HEK293 (cell line): ENCODE measurements at regions of chr1 and their contacts with region 1.

Region 1: DNA sequence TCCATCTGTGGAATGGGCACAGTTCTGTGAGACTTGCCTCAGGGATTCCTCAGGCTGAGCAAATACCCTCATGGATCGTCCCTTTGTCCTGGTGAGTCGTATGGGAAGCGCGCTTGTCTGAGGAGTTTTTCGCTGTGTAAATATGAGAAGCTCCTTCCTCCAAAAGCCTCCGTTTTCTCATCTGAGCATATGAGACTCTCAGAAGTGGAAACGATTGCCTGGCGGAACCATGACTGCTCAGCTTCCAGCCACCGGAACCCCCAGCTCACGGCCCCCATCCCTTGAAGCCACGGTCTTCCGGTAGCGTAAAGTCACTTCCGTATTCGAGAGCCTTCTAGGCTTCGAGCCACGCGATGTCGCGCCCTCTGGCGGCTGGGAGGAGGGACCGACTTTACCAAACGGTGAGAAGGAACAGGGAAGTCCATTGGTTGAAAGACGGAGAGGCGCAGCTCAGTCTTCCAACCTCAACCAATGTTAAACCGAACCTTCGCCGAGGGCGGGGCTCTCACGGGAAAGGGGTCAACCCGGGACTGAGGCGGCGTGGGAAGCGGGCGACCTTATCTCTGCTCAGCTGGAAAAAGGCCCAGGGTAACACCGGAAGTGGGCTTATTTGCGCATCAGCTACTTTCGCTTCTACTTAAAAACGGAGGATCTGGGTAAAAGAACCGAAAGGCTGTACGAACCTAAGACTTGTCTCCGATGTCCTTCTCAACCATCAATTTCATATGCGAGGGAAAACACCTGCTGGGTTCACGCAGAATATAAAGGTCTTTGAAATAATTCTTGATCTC is 46.2 kb downstream of the AZIN2 start:
- H3K4me3 ChIP-seq: peak overlapping the region; percentile 75
- H3K27ac ChIP-seq: peak overlapping the region; percentile 74
- H3K4me1 ChIP-seq: peaks cover 5% of the 10 kb centered on the region
- CTCF ChIP-seq: peak; percentile 99

Region 2: GRCh38 chr1:33080885-33081553 is 46.2 kb before region 1 on chr1 and contains the start of gene AZIN2:
- CTCF ChIA-PET with region 1: interaction called, 4 read pairs
- POLR2A ChIA-PET with region 1: interaction called, 13 read pairs
- H3K4me3 ChIP-seq: peak within 1 kb of the TSS; percentile 69
- H3K27ac ChIP-seq: no peak within 1 kb of the TSS; the same call in 1 of the 2 replicates
- H3K4me1 ChIP-seq: no peaks in the 10 kb centered on the region
- CTCF ChIP-seq: no peak

Region 3: DNA sequence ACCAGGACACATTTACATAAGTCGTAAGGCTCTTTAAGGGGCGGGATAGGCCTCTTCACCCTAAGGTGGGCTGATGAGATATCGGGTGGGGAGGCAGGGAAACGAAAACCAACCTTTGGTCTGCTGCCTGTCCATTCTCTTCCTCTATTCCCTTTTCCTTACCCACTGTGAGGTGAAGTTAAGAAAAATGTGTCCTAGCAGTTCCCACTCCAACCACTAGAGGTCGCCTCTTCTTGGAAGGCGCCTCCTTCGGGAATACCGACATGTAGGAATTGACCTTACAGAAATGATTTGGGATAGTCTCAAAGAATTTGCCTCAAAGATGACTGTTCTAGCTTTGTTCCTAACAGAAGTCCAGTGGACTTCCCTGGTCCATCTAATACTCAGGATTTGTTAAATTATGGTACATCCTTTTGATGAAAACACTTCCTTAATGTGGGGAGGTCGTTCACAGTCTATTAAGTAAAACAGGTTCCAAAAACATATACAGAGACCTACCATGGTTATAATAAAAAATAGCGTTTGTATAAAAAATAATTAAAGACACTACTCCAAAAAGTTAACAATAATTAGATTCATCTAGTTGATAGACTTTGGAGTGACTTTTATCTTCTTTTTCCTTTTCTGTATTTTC is 32.1 kb before region 1 on chr1:
- CTCF ChIA-PET with region 1: interaction called, 16 read pairs
- POLR2A ChIA-PET with region 1: interaction called, 10 read pairs
- H3K4me3 ChIP-seq: no peak overlapping the region
- H3K27ac ChIP-seq: no peak overlapping the region
- H3K4me1 ChIP-seq: no peaks in the 10 kb centered on the region
- CTCF ChIP-seq: peak; percentile 67; the same call in 1 of the 2 replicates

Region 4: DNA sequence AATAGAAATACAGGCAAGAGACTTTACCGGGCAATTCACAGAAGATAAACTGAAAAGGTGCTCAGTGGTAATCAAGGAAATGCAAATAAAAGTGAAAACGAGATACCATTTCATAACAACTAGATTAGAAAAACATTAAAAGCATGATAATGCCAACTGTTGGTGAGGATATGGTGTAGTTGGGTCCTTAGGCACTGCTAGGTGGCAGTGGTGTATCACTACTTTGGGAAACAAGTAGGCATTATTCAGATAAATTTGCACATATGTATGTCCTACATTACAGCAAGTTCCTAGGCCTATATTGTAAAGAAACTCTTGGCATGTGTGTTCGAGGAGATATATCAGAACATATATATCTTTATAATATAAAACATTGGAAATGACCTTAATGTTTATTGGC is 15.2 kb before region 1 on chr1:
- CTCF ChIA-PET with region 1: interaction called, 16 read pairs
- POLR2A ChIA-PET with region 1: interaction called, 5 read pairs
- H3K4me3 ChIP-seq: no peak overlapping the region
- H3K27ac ChIP-seq: no peak overlapping the region
- H3K4me1 ChIP-seq: no peaks in the 10 kb centered on the region
- CTCF ChIP-seq: no peak

Region 5: GRCh38 chr1:33137800-33138199 is 10.6 kb after region 1 on chr1:
- CTCF ChIA-PET with region 1: interaction called, 38 read pairs
- POLR2A ChIA-PET with region 1: interaction called, 4 read pairs
- H3K4me3 ChIP-seq: no peak overlapping the region
- H3K27ac ChIP-seq: no peak overlapping the region
- H3K4me1 ChIP-seq: peaks cover 3% of the 10 kb centered on the region
- CTCF ChIP-seq: peak; percentile 44; the same call in 1 of the 2 replicates

Region 6: DNA sequence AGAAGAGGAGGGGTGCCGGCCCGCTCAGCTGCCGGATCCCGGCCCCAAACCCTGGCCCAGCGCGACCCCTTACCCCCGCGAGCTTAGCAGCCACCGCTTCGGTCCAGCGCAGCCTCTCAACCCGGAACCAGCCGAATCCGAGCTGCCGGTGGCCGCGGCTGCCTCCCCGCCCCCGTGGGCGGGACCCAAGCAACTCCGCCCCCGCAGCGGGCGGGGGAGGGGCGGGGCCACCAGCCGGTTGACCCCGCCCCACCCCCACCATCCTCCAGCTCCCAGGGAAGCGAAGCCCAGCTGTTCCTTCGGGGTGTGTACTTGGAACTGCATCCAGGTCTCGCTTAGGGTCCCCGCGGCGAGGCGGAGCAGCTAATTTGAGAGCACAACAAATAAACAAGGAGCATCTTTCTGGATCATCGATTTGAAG is 54.7 kb after region 1 on chr1 and contains the start of gene TRIM62:
- CTCF ChIA-PET with region 1: interaction called, 3 read pairs
- POLR2A ChIA-PET with region 1: interaction called, 28 read pairs
- H3K4me3 ChIP-seq: peak within 1 kb of the TSS; percentile 82
- H3K27ac ChIP-seq: peak within 1 kb of the TSS; percentile 16; the same call in 1 of the 2 replicates
- H3K4me1 ChIP-seq: no peaks in the 10 kb centered on the region; the same call in 1 of the 2 replicates
- CTCF ChIP-seq: no peak